ENCODE measurements at regions of chr6 and their contacts with region 1.

Region 1: GRCh38 chr6:117602151-117602898 is at the start of gene GOPC:
- H3K4me3 Mint-ChIP-seq: peak within 1 kb of the TSS; percentile 97
- H3K27ac Mint-ChIP-seq: peak within 1 kb of the TSS; percentile 92
- H3K4me1 Mint-ChIP-seq: peaks cover 25% of the 10 kb centered on the region
- H3K27me3 Mint-ChIP-seq: no peaks in the 10 kb centered on the region

Region 2: GRCh38 chr6:117346142-117346930 is 256.0 kb before region 1 on chr6:
- intact Hi-C with region 1: loop called (anchors 1 kb)
- H3K4me3 Mint-ChIP-seq: no peak overlapping the region
- H3K27ac Mint-ChIP-seq: no peak overlapping the region
- H3K4me1 Mint-ChIP-seq: no peaks in the 10 kb centered on the region
- H3K27me3 Mint-ChIP-seq: no peaks in the 10 kb centered on the region

Region 3: DNA sequence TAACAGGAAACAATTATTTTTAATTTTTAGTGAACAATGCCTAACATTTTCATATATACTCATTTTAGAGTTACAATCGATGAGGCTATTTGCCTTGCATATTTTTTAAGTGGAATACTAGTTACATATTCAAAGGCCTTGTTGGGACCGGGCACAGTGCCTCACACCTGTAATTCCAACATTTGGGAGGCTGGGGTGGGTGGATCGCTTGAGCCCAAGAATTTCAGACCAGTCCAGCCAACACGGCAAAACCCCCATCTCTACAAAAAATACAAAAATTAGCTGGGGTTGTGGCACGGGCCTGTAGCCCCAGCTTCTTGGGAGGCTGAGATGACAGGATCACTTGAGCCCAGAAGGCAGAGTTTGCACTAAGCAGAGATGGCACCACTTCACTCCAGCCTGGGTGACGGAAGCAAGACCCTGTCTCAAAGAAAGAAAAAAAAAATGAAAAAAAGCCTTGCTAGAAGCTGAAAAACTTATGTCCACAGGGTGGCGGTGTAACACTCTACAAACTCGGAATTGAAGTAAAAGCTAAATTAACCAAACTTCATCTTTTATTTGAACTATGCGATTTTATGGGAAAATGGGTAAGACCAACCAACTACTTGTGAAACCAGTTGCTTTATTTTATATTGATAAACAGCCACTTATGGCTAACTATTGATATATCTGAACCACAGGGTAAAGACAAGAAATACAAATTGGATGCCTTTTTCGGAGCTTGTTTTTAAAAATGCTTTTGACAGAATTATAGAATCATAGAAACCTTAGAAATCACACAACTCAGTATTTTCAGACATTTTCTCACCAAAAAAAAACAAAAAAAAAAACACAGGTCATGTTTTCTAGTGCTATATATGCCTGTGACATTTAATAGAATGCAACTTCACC is 152.5 kb before region 1 on chr6:
- intact Hi-C with region 1: loop called (anchors 1 kb)
- H3K4me3 Mint-ChIP-seq: no peak overlapping the region
- H3K27ac Mint-ChIP-seq: no peak overlapping the region
- H3K4me1 Mint-ChIP-seq: peaks cover 6% of the 10 kb centered on the region
- H3K27me3 Mint-ChIP-seq: peaks cover 27% of the 10 kb centered on the region

Region 4: DNA sequence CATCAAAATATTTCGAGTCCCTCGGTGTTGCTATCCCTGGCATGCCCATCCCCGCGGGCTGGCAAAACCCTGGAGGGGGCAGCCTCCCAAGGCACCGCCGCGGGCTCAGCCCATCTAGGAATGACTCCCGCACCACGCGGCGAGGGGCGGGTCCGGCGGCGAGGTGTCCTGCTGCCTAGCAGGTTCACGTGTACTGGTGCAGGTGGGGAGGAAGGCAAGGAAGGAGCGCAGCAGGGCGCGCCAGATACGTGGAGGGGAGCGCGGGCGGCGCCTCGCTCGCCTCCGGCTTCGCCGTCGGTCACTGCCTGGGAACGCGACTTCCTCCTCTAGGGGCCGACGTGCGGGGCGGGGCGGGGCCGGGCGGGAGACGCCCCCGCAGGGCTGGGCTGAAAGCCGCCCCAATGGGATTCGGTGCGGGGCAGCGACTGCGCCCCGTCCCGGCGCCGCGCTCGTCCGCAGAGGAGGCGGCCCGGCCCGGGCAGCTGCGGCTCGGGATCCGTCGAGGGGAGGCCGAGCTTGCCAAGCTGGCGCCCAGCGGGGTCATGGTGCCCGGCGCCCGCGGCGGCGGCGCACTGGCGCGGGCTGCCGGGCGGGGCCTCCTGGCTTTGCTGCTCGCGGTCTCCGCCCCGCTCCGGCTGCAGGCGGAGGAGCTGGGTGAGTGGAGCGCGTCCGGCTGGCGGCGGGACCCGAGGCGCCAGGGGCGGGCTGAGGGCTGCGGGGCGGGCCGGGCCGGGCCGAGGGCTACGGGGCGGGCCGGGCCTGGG is 119.9 kb before region 1 on chr6 and contains the start of gene DCBLD1:
- intact Hi-C with region 1: loop called (anchors 1 kb)
- H3K4me3 Mint-ChIP-seq: peak within 1 kb of the TSS; percentile 94
- H3K27ac Mint-ChIP-seq: peak within 1 kb of the TSS; percentile 83
- H3K4me1 Mint-ChIP-seq: peaks cover 13% of the 10 kb centered on the region
- H3K27me3 Mint-ChIP-seq: peaks cover 46% of the 10 kb centered on the region

Region 5: GRCh38 chr6:117555882-117556498 is 46.3 kb before region 1 on chr6:
- intact Hi-C with region 1: loop called (anchors 5 kb)
- H3K4me3 Mint-ChIP-seq: no peak overlapping the region
- H3K27ac Mint-ChIP-seq: no peak overlapping the region
- H3K4me1 Mint-ChIP-seq: no peaks in the 10 kb centered on the region
- H3K27me3 Mint-ChIP-seq: peaks cover 2% of the 10 kb centered on the region

Region 6: GRCh38 chr6:117674991-117675657 is 72.8 kb after region 1 on chr6 and contains the start of gene NUS1:
- intact Hi-C with region 1: loop called (anchors 5 kb)
- H3K4me3 Mint-ChIP-seq: peak within 1 kb of the TSS; percentile 86
- H3K27ac Mint-ChIP-seq: peak within 1 kb of the TSS; percentile 68
- H3K4me1 Mint-ChIP-seq: peaks cover 40% of the 10 kb centered on the region
- H3K27me3 Mint-ChIP-seq: no peaks in the 10 kb centered on the region